ENCODE measurements at regions of chr13 and their contacts with region 1.

Region 1: GRCh38 chr13:44231786-44232516 is 141.7 kb upstream of the SERP2 start:
- DNase-seq: peak; percentile 92 to 93
- ATAC-seq: peak; percentile 81 to 93
- H3K4me3 ChIP-seq: no peak overlapping the region
- H3K27ac ChIP-seq: peak overlapping the region; percentile 79 to 90 (median 84)
- H3K4me1 ChIP-seq: peaks cover 39 to 42% of the 10 kb centered on the region in 2 donors
- H3K27me3 ChIP-seq: no peaks in the 10 kb centered on the region
- CTCF ChIP-seq: peak in 2 of 5 experiments; percentile 16
- POLR2A ChIP-seq: no peak

Region 2: GRCh38 chr13:44191504-44192171 is 40.3 kb before region 1 on chr13:
- in situ Hi-C with region 1: no loop called
- intact Hi-C with region 1: loop called (anchors 2 kb)
- DNase-seq: peak; percentile 57 to 68
- ATAC-seq: peak; percentile 98 to 99
- H3K4me3 ChIP-seq: peak overlapping the region; percentile 26 to 44 (median 32)
- H3K27ac ChIP-seq: peak overlapping the region; percentile 52 to 71 (median 56)
- H3K4me1 ChIP-seq: peaks cover 5 to 11% of the 10 kb centered on the region in 2 donors
- H3K27me3 ChIP-seq: no peaks in the 10 kb centered on the region
- CTCF ChIP-seq: peak; percentile 80 to 98 (median 89)
- POLR2A ChIP-seq: no peak

Region 3: DNA sequence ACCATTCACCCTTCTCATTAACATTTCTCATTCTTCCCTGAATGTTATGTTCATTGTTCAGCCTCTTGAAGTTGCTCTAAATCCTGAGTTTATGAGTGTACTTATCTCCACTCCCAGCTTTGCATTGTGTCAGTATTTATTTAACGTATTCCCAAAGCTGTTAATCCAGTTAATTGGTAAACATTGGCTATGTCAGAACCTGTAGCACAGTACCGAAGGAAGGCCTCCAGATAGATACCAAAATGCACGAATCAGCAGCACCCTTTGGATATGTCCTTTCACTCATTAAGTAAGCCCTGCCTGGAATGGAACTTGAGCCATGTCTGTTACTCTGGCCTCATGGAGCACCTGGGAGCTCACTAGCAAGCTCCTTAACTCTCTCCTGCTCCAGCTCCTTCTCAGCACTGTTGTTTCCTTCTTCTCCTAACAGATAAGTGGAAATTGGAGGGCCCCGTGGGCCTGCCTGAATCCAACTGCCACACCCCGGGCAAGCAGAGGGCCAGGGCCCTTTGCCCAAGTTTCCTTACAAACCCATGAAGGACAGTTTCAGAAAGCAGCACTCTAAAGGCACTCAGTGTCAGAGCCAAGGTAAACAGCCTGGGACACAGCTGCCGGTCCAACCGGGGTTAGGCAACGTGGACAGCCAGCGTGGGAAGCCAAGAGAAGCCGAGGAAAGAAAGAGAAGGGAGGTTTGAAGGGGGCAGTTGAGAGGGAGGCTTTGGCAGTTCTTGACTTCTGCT is 13.3 kb before region 1 on chr13:
- in situ Hi-C with region 1: no loop called
- intact Hi-C with region 1: loop called (anchors 1 kb)
- DNase-seq: peak; percentile 81 to 87
- ATAC-seq: peak; percentile 92 to 95
- H3K4me3 ChIP-seq: no peak overlapping the region
- H3K27ac ChIP-seq: peak overlapping the region; percentile 79 to 90 (median 85)
- H3K4me1 ChIP-seq: peaks cover 29 to 46% of the 10 kb centered on the region in 2 donors
- H3K27me3 ChIP-seq: no peaks in the 10 kb centered on the region
- CTCF ChIP-seq: no peak
- POLR2A ChIP-seq: no peak

Region 4: GRCh38 chr13:44273644-44274451 is 41.9 kb after region 1 on chr13:
- in situ Hi-C with region 1: no loop called
- intact Hi-C with region 1: loop called (anchors 1 kb)
- DNase-seq: no peak
- ATAC-seq: no peak
- H3K4me3 ChIP-seq: peak overlapping the region in 2 of 4 donors; percentile 13 to 14
- H3K27ac ChIP-seq: peak overlapping the region; percentile 70 to 97 (median 93)
- H3K4me1 ChIP-seq: peaks cover 44 to 63% of the 10 kb centered on the region in 2 donors
- H3K27me3 ChIP-seq: no peaks in the 10 kb centered on the region
- CTCF ChIP-seq: no peak
- POLR2A ChIP-seq: no peak

Region 5: GRCh38 chr13:44543369-44543768 is 311.4 kb after region 1 on chr13:
- in situ Hi-C with region 1: no loop called
- intact Hi-C with region 1: no loop called
- DNase-seq: no peak
- ATAC-seq: no peak
- H3K4me3 ChIP-seq: no peak overlapping the region
- H3K27ac ChIP-seq: peak overlapping the region; percentile 57 to 82 (median 68)
- H3K4me1 ChIP-seq: peaks cover 44 to 47% of the 10 kb centered on the region in 2 donors
- H3K27me3 ChIP-seq: no peaks in the 10 kb centered on the region
- CTCF ChIP-seq: no peak
- POLR2A ChIP-seq: no peak